ENCODE measurements at regions of chr2 and their contacts with region 1.

Region 1: DNA sequence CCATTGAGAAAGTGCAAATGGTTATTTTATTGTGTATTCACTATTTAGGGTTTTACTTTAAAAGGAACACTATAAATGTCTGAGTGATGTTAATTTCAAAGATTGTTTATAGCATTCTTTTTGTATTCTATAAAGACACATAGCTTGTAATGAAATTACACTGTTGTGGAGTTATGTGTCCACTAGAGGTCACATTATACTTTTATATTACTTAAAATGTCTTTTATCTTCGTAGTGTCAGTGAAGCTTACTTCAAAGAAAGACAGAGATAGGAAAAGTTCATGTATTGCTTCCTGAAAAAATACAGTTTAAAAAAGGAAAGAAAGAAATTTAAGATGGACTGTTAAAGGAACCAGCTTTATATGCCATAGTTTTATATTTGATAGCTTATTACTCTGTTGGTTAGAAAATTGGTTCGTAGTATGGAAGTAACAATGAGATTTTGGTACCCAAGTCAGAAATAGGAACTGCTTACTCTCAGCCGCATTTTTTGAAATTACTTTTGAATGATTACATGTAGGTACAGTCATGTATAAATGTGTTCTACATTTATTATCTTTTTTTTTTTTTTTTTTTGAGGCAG is 20.5 kb downstream of the APLF start:
- DNase-seq: peak; percentile 53
- ATAC-seq: peak; percentile 75; the same call in 1 of the 2 replicates
- H3K4me3 ChIP-seq: no peak overlapping the region
- H3K27ac ChIP-seq: no peak overlapping the region
- H3K4me1 ChIP-seq: 0 out of 2 replicates have a peak, but pooled peaks cover 2% of the 10 kb centered on the region
- H3K27me3 ChIP-seq: no peaks in the 10 kb centered on the region
- CTCF ChIP-seq: peak; percentile 56
- POLR2A ChIP-seq: no peak
- RAD21 ChIP-seq: peak; percentile 51

Region 2: DNA sequence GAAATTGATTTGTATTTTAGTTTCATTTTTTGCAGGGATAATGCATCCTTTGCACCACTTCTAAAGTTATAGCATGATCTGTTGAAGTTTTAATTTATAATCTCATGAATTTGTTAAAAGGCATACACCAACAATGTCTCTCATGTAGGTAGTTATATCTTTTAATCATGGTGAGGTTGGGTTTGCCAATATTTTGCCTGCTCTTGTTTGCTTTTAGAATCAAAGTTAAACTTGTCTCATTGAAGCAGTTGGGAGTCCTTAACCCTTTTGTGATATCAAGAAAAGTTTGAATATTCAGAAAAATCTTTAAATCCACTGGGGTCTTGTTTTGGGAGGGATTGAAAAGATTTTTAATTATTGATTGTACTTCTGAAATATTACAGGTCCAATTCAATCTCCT is 11.3 kb after region 1 on chr2:
- CTCF ChIA-PET with region 1: interaction called, 10 read pairs
- POLR2A ChIA-PET with region 1: no interaction called
- dilution Hi-C with region 1: no loop called
- in situ Hi-C with region 1: no loop called
- intact Hi-C with region 1: no loop called
- DNase-seq: no peak
- ATAC-seq: no peak
- H3K4me3 ChIP-seq: no peak overlapping the region
- H3K27ac ChIP-seq: no peak overlapping the region
- H3K4me1 ChIP-seq: no peaks in the 10 kb centered on the region
- H3K27me3 ChIP-seq: no peaks in the 10 kb centered on the region
- CTCF ChIP-seq: no peak
- POLR2A ChIP-seq: no peak
- RAD21 ChIP-seq: no peak

Region 3: GRCh38 chr2:68594674-68595492 is 107.0 kb after region 1 on chr2:
- CTCF ChIA-PET with region 1: interaction called, 10 read pairs
- POLR2A ChIA-PET with region 1: no interaction called
- dilution Hi-C with region 1: no loop called
- in situ Hi-C with region 1: loop called (anchors 25 kb)
- intact Hi-C with region 1: loop called (anchors 2 kb)
- DNase-seq: peak; percentile 56
- ATAC-seq: peak; percentile 74
- H3K4me3 ChIP-seq: no peak overlapping the region
- H3K27ac ChIP-seq: no peak overlapping the region
- H3K4me1 ChIP-seq: no peaks in the 10 kb centered on the region
- H3K27me3 ChIP-seq: peaks cover 2% of the 10 kb centered on the region; the same call in 1 of the 2 replicates
- CTCF ChIP-seq: peak; percentile 81
- POLR2A ChIP-seq: no peak
- RAD21 ChIP-seq: peak; percentile 56

Region 4: GRCh38 chr2:68925295-68925896 is 437.5 kb after region 1 on chr2:
- CTCF ChIA-PET with region 1: interaction called, 6 read pairs
- POLR2A ChIA-PET with region 1: no interaction called
- dilution Hi-C with region 1: no loop called
- in situ Hi-C with region 1: no loop called
- intact Hi-C with region 1: loop called (anchors 1 kb)
- DNase-seq: peak; percentile 64
- ATAC-seq: peak; percentile 67; the same call in 1 of the 2 replicates
- H3K4me3 ChIP-seq: no peak overlapping the region
- H3K27ac ChIP-seq: no peak overlapping the region
- H3K4me1 ChIP-seq: peaks cover 3% of the 10 kb centered on the region
- H3K27me3 ChIP-seq: no peaks in the 10 kb centered on the region; the same call in 1 of the 2 replicates
- CTCF ChIP-seq: peak; percentile 96
- POLR2A ChIP-seq: peak; percentile 20; the same call in 1 of the 2 replicates
- RAD21 ChIP-seq: peak; percentile 96